ENCODE measurements at regions of chr12 and their contacts with region 1.

Region 1: GRCh38 chr12:110100315-110100970 is 23.7 kb upstream of the IFT81 start:
- DNase-seq: peak; percentile 93
- ATAC-seq: peak; percentile 93
- H3K4me3 ChIP-seq: no peak overlapping the region
- H3K27ac ChIP-seq: peak overlapping the region; percentile 49
- H3K4me1 ChIP-seq: peaks cover 9% of the 10 kb centered on the region; the same call in 1 of the 2 replicates
- H3K27me3 ChIP-seq: no peaks in the 10 kb centered on the region
- CTCF ChIP-seq: peak; percentile 85 to 92 (median 85)
- EP300 ChIP-seq: peak in 1 of 2 experiments; percentile 30; a peak in 1 of 4 replicates
- POLR2A ChIP-seq: no peak
- RAD21 ChIP-seq: peak; percentile 96

Region 2: DNA sequence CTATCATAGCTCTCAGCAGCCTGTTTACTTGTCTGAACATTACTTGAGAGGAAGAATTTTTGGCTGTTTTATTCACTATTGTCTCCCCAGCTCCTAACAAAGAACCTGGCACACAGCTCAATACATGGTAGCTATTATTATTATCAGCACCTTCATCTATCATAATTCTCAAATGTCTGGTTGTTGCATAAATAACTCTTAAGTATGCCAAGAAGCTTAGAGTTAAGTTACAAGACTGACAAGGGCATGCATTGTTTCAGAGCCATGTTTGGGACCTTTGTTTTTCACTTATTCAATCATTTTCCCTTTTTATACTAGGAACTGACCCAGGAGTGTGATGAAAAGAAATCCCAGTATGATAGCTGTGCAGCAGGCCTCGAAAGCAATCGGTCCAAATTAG is 103.1 kb after region 1 on chr12:
- CTCF ChIA-PET with region 1: no interaction called
- POLR2A ChIA-PET with region 1: no interaction called
- RAD21 ChIA-PET with region 1: no interaction called
- SMC1A ChIA-PET with region 1: no interaction called
- in situ Hi-C with region 1: no loop called
- intact Hi-C with region 1: no loop called
- DNase-seq: no peak
- ATAC-seq: no peak
- H3K4me3 ChIP-seq: no peak overlapping the region
- H3K27ac ChIP-seq: no peak overlapping the region
- H3K4me1 ChIP-seq: peaks cover 11% of the 10 kb centered on the region
- H3K27me3 ChIP-seq: no peaks in the 10 kb centered on the region
- CTCF ChIP-seq: no peak
- EP300 ChIP-seq: no peak
- POLR2A ChIP-seq: no peak
- RAD21 ChIP-seq: no peak

Region 3: GRCh38 chr12:110245369-110245772 is 144.9 kb after region 1 on chr12:
- CTCF ChIA-PET with region 1: interaction called, 21 read pairs
- POLR2A ChIA-PET with region 1: interaction called, 4 read pairs
- RAD21 ChIA-PET with region 1: interaction called, 8 read pairs
- SMC1A ChIA-PET with region 1: interaction called, 4 read pairs
- in situ Hi-C with region 1: loop called (anchors 5 kb)
- intact Hi-C with region 1: loop called (anchors 1 kb)
- DNase-seq: no peak
- ATAC-seq: peak; percentile 97
- H3K4me3 ChIP-seq: no peak overlapping the region
- H3K27ac ChIP-seq: no peak overlapping the region
- H3K4me1 ChIP-seq: peaks cover 5% of the 10 kb centered on the region; the same call in 1 of the 2 replicates
- H3K27me3 ChIP-seq: no peaks in the 10 kb centered on the region
- CTCF ChIP-seq: peak; percentile 67 to 81 (median 74)
- EP300 ChIP-seq: no peak
- POLR2A ChIP-seq: no peak
- RAD21 ChIP-seq: peak; percentile 66

Measured in GM12878 (cell line).